ENCODE measurements at regions of chr12 and their contacts with region 1.

Region 1: DNA sequence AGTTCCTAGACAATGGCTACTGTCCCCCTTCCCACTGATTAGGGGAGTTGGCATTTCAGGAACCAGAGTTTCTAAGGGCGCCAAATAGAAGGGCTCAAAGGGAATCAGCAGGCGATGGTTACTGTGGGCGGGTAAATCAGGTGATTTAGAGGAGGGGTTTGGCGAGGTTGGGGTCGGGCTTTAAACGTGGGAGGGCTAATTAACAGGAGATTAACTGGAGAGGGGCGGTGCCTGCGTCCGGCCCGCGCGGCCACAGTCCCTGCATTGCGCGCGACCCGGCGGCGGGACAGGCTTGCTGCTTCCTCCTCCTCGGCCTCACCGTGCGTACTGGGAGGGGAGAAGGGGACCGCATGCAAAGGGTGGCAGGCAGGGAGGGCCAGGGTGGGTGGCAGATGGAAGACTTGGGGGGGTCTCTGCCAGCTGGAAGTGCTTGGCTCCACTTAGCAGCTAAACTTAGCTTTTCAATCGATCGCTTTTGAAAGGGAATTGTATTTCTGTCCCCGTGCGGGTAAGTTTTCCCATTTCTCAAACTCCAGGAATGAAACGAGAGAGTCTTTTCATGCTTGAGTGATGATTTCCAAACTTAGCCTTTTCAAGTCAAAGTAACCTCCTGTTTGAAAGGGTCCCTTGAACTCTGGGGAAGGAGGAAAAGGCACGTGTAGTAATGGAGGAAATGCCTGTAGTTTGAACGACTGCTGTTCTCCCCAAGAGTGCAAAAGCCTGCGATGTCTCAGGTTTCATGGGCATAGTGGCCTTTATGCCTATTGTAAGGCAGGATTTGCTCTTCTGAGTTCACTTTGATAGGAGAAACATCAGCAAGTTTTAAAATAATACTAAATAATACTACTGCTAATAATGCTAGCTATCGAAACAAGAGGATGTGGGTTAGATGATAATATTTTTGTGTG is at the start of gene MGST1:
- DNase-seq: peak; percentile 73
- ATAC-seq: peak; percentile 69
- H3K4me3 ChIP-seq: peak within 1 kb of the TSS; percentile 93
- H3K27ac ChIP-seq: peak within 1 kb of the TSS; percentile 99
- H3K4me1 ChIP-seq: peaks cover 44% of the 10 kb centered on the region
- H3K27me3 ChIP-seq: no peaks in the 10 kb centered on the region
- CTCF ChIP-seq: no peak
- total RNA-seq, gene MGST1: 99.3 and 105 TPM in 2 replicates

Region 2: GRCh38 chr12:15882118-15882971 is 465.3 kb before region 1 on chr12 and contains the start of gene STRAP:
- CTCF ChIA-PET with region 1: no interaction called
- POLR2A ChIA-PET with region 1: no interaction called
- intact Hi-C with region 1: loop called (anchors 5 kb)
- DNase-seq: peak; percentile 95
- ATAC-seq: peak; percentile 86
- H3K4me3 ChIP-seq: peak within 1 kb of the TSS; percentile 95
- H3K27ac ChIP-seq: peak within 1 kb of the TSS; percentile 90
- H3K4me1 ChIP-seq: peaks cover 5% of the 10 kb centered on the region
- H3K27me3 ChIP-seq: no peaks in the 10 kb centered on the region
- CTCF ChIP-seq: no peak
- total RNA-seq, gene STRAP: 64.8 and 80.4 TPM in 2 replicates

Region 3: DNA sequence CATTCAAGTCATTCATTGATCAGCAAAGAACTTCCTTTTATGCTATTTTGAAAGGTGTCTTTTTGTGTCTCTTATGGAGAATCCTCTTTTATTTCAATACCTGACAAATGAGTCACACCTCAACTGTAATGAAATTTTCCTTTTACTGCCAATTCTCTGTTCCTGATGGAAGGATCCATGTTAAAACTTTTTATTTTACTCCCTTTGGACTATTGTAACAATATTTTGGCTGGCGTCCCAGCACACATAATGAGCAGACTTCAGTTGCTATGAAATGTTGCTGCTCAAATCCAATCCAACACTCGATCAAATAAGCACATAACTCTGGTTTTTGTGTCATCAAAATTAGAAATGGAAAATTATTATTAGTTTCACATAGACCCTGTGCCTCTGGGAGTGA is 48.2 kb before region 1 on chr12:
- CTCF ChIA-PET with region 1: no interaction called
- POLR2A ChIA-PET with region 1: no interaction called
- intact Hi-C with region 1: loop called (anchors 5 kb)
- DNase-seq: peak; percentile 36
- ATAC-seq: peak; percentile 38
- H3K4me3 ChIP-seq: no peak overlapping the region
- H3K27ac ChIP-seq: no peak overlapping the region
- H3K4me1 ChIP-seq: peaks cover 7% of the 10 kb centered on the region; the same call in 1 of the 2 replicates
- H3K27me3 ChIP-seq: no peaks in the 10 kb centered on the region
- CTCF ChIP-seq: no peak

Measured in PC-3 (cell line).